Activated CD8-positive, alpha-beta memory T cell treated with anti-CD3 and anti-CD28 coated beads, Interleukin-2, amount 10 ng/mL, durations not matched to agents 7 days and 5 days (primary cell): ENCODE measurements at regions of chr10 and their contacts with region 1.

Region 1: GRCh38 chr10:103772096-103772845 is 83.1 kb downstream of the SH3PXD2A start:
- DNase-seq: peak; percentile 81
- ATAC-seq: peak; percentile 89
- H3K4me3 Mint-ChIP-seq: peak overlapping the region; percentile 77
- H3K27ac Mint-ChIP-seq: peak overlapping the region; percentile 90
- H3K4me1 Mint-ChIP-seq: peaks cover 28% of the 10 kb centered on the region
- H3K27me3 Mint-ChIP-seq: no peaks in the 10 kb centered on the region

Region 2: GRCh38 chr10:103752680-103753248 is 19.5 kb before region 1 on chr10:
- CTCF ChIA-PET with region 1: interaction called, 13 read pairs
- DNase-seq: no peak
- ATAC-seq: no peak
- H3K4me3 Mint-ChIP-seq: no peak overlapping the region
- H3K27ac Mint-ChIP-seq: no peak overlapping the region
- H3K4me1 Mint-ChIP-seq: peaks cover 43% of the 10 kb centered on the region
- H3K27me3 Mint-ChIP-seq: peaks cover 5% of the 10 kb centered on the region

Region 3: DNA sequence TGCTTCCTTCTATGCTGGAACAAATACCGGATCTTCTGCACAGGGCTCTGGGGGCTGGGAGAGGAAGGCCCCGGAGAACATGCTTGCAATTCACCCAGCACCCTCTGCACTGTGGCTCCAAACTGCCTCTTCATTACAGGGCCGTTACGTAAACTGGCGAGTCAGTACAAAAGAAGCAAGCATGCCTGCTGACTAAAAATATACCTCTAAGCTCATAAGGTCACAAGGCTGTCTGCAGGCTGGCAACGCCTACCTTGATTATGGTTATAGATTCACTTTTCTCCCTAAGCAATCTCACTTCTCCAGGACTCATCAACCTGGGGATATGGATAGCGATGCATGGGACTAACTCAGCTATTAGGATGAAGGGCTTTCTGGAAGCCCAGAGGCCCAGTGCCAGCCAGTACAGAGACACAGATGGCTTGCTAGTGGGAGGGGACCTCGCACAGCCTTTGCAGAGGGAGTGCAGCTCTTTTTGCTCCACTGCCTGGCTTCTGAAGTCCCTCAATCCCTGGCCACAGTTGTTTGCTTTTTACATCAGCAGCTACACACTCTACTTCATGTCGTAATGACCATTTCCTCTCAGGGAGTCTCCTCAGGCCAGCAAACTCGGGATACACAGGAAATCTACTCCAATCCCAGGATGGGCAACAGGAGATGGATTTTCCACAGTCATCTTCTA is 13.0 kb before region 1 on chr10:
- CTCF ChIA-PET with region 1: interaction called, 10 read pairs
- DNase-seq: peak; percentile 80
- ATAC-seq: peak; percentile 77
- H3K4me3 Mint-ChIP-seq: peak overlapping the region; percentile 8
- H3K27ac Mint-ChIP-seq: peak overlapping the region; percentile 82
- H3K4me1 Mint-ChIP-seq: peaks cover 66% of the 10 kb centered on the region
- H3K27me3 Mint-ChIP-seq: no peaks in the 10 kb centered on the region